ENCODE measurements at regions of chr17 and their contacts with region 1.

Region 1: DNA sequence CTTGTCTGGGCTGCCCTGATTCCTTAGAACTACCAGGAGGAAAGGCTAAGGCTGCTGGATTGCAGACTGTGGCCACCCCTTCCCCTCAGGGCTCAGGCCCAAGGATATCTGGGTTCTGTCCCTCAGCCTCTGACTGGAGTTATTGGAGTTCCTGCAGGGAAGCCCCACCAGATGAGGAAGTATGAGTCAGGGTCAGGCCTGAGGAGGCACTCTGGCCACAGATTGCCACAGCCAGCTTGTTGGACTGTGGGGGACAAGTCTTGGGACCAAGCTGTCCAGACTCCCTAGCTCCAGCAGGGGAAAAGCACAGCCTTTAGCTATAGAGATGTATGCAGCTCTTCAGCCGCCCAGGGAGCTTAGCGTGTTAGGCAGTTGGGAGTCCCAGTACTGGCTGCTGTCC is 381.9 kb upstream of the TOM1L1 start:
- DNase-seq: no peak
- H3K4me3 ChIP-seq: no peak overlapping the region
- H3K4me3 Mint-ChIP-seq: no peak overlapping the region
- H3K27ac Mint-ChIP-seq: no peak overlapping the region
- H3K4me1 ChIP-seq: peaks cover 22% of the 10 kb centered on the region
- H3K4me1 Mint-ChIP-seq: peaks cover 24% of the 10 kb centered on the region
- H3K27me3 ChIP-seq: no peaks in the 10 kb centered on the region
- H3K27me3 Mint-ChIP-seq: peaks cover 4% of the 10 kb centered on the region
- CTCF ChIP-seq: no peak

Region 2: DNA sequence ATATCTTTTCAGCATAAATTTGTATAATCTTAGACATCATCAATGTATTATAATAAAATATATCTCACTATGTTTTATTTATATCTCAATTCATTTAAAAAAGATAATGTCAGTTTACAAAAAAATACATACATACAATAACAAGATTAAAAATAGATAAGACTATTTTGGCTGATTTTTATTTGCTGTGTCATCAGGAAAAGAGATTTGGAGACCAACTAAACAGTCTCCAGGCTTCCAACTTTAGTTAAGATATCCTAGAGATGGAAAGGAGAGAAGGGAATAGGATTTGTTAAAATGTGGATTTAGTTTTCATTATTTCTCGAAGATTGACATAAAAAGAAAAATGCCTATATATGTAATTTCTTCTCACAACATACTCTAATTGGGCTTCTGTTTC is 51.8 kb before region 1 on chr17:
- CTCF ChIA-PET with region 1: no interaction called
- POLR2A ChIA-PET with region 1: no interaction called
- intact Hi-C with region 1: no loop called
- DNase-seq: no peak
- H3K4me3 ChIP-seq: no peak overlapping the region
- H3K4me3 Mint-ChIP-seq: no peak overlapping the region
- H3K27ac Mint-ChIP-seq: no peak overlapping the region
- H3K4me1 ChIP-seq: no peaks in the 10 kb centered on the region
- H3K4me1 Mint-ChIP-seq: no peaks in the 10 kb centered on the region
- H3K27me3 ChIP-seq: no peaks in the 10 kb centered on the region
- H3K27me3 Mint-ChIP-seq: no peaks in the 10 kb centered on the region
- CTCF ChIP-seq: no peak

Region 3: DNA sequence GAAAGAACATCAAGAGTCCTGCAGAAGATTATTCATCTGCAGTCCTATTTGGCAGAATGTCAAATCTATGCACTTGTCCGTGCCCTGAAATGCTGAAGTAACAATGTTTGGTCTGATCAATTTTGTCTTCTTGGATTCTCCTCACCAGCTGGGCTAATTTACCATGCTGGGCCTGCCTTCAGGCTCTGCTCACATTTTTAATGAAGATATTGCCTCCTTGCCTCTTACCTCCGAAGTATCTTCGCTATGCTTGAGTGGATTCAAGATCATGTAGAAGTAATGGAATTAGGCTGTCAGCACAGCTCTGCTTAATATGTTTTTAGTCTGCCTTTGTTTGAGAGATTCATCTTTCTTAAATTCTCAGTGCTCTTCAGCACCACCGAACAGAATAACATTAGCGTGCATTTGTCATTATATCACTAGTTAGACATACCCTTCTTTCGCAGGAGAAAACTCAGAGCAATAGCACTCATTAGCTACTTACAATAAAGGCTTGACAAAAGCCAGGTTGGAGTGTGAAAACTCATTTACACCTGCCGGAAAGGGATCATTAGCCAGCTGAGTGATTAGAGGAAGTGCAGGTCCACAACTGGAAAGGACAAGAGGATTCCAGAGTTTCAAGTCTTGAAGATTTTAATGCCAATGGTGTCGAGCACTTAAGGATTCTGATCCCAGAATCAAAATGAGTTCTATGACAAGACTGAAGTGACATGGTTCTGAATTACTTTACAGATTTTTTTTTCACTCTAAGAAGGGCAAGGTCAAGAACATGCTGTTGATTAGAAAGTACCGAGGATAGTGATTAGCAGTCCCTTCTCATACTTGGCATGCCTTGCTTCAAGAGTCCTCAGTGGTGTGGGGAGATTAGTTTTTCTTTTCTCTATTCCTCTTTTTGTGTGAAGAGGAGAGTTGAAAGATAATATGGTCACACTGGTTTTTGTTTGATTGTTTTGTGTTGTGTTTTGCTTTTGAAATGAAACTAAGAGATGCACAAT is 23.7 kb before region 1 on chr17:
- CTCF ChIA-PET with region 1: no interaction called
- POLR2A ChIA-PET with region 1: no interaction called
- intact Hi-C with region 1: no loop called
- DNase-seq: no peak
- H3K4me3 ChIP-seq: no peak overlapping the region
- H3K4me3 Mint-ChIP-seq: no peak overlapping the region
- H3K27ac Mint-ChIP-seq: no peak overlapping the region
- H3K4me1 ChIP-seq: no peaks in the 10 kb centered on the region
- H3K4me1 Mint-ChIP-seq: no peaks in the 10 kb centered on the region
- H3K27me3 ChIP-seq: no peaks in the 10 kb centered on the region
- H3K27me3 Mint-ChIP-seq: no peaks in the 10 kb centered on the region
- CTCF ChIP-seq: no peak

Region 4: DNA sequence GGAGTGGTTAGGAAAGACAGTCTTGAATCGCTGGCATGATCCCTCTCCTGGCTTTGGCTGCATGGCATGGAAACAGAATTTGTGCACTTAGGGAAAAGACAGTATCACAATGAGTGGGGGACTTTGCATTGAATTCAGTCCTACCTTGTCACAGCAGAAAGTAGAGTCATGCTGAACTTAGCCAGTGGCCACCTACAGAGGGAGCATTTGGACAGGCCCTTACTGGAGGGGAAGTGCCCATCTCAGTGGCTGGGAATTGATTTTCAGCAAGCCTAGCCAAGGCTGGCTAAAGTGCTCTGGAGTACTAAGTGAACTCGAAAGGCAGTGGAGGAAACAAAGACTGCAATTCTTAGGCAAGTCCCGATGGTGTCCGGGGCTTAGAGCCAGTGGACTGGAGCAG is 17.6 kb after region 1 on chr17:
- CTCF ChIA-PET with region 1: no interaction called
- POLR2A ChIA-PET with region 1: no interaction called
- intact Hi-C with region 1: loop called (anchors 2 kb)
- DNase-seq: no peak
- H3K4me3 ChIP-seq: no peak overlapping the region
- H3K4me3 Mint-ChIP-seq: no peak overlapping the region
- H3K27ac Mint-ChIP-seq: peak overlapping the region; percentile 30
- H3K4me1 ChIP-seq: peaks cover 20% of the 10 kb centered on the region
- H3K4me1 Mint-ChIP-seq: peaks cover 19% of the 10 kb centered on the region
- H3K27me3 ChIP-seq: no peaks in the 10 kb centered on the region
- H3K27me3 Mint-ChIP-seq: no peaks in the 10 kb centered on the region
- CTCF ChIP-seq: no peak

Measured in Caco-2 (cell line).